ENCODE measurements at regions of chr16 and their contacts with region 1.

Region 1: DNA sequence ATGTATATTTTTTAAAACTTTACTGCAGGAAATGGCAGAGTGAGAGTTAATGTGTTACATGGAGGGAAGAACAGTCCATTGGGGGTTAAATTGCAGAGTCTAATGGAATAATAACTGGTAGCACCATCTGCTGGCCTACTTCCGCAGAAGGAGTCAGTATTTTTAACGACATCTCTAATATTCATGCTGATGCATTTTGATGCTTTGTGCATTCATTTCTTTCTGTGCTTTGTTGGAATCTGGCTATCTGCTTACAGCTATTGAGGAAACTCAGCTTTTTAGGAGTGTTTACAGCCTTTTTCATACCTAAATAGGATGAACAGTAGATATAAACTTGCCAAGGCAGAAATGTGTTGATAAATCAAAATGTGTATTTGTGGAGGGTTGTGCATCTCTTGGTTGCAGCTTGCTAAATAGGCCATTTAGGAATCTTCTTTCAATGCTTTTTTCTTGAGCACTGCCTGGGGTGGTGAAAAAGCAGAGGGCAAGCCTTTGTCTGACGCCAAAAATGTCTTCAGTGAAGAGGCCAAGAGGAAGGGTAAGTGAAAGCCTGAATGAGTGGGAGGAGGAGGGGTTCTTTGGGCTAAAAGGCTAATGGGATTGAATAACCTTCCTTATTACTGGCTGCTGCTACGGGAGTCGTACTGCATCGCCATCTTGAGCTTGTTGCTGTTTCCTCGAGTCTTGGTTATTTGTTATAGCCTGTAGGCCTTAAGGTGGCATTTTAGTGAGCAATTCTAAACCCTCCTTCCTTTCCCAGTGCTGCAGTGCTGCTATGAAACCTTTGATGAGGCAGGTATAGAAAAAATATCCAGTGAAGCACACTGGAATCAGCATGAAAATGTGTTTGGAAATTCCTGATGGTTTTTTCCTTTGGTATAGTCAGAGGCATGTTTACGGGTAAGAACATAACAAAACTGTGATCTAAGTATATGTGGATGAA is 153.3 kb downstream of the CHD9 start:
- DNase-seq: peak; percentile 69
- ATAC-seq: peak; percentile 83
- H3K4me3 ChIP-seq: peak overlapping the region; percentile 72
- H3K27ac ChIP-seq: peak overlapping the region; percentile 95
- H3K4me1 ChIP-seq: peaks cover 3% of the 10 kb centered on the region; the same call in 1 of the 2 replicates
- H3K27me3 ChIP-seq: no peaks in the 10 kb centered on the region
- CTCF ChIP-seq: peak; percentile 51 to 63 (median 55)
- EP300 ChIP-seq: no peak
- POLR2A ChIP-seq: peak; percentile 57; the same call in 1 of the 2 replicates
- RAD21 ChIP-seq: peak; percentile 58

Region 2: GRCh38 chr16:53099318-53100130 is 108.6 kb before region 1 on chr16:
- CTCF ChIA-PET with region 1: interaction called, 10 read pairs
- POLR2A ChIA-PET with region 1: interaction called, 4 read pairs
- RAD21 ChIA-PET with region 1: interaction called, 16 read pairs
- SMC1A ChIA-PET with region 1: interaction called, 7 read pairs
- in situ Hi-C with region 1: no loop called
- intact Hi-C with region 1: no loop called
- DNase-seq: peak; percentile 68
- ATAC-seq: peak; percentile 75
- H3K4me3 ChIP-seq: peak overlapping the region; percentile 79
- H3K27ac ChIP-seq: peak overlapping the region; percentile 96
- H3K4me1 ChIP-seq: peaks cover 25% of the 10 kb centered on the region
- H3K27me3 ChIP-seq: no peaks in the 10 kb centered on the region
- CTCF ChIP-seq: no peak
- EP300 ChIP-seq: peak; percentile 7 to 55; a peak in 1 of 4 replicates
- POLR2A ChIP-seq: peak; percentile 50
- RAD21 ChIP-seq: no peak

Region 3: DNA sequence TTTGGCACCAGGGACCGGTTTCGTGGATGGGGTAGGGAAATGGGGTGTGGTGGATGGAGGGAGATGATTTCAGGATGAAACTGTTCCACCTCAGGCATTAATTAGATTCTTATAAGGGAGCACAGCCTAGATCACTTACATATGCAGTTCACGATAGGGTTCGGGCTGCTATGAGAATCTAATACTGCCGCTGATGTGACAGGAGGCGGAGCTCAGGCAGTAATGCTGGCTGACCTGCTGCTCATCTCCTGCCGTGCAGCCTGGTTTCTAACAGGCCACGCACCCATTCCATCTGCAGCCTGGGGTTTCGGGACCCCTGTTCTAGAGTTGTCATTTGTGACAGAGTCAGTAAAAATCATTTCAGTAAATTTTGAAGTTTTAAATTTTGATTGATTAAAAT is 53.6 kb before region 1 on chr16:
- CTCF ChIA-PET with region 1: interaction called, 16 read pairs
- POLR2A ChIA-PET with region 1: no interaction called
- RAD21 ChIA-PET with region 1: interaction called, 7 read pairs
- SMC1A ChIA-PET with region 1: interaction called, 21 read pairs
- in situ Hi-C with region 1: no loop called
- intact Hi-C with region 1: no loop called
- DNase-seq: no peak
- ATAC-seq: no peak
- H3K4me3 ChIP-seq: no peak overlapping the region
- H3K27ac ChIP-seq: no peak overlapping the region
- H3K4me1 ChIP-seq: no peaks in the 10 kb centered on the region; the same call in 1 of the 2 replicates
- H3K27me3 ChIP-seq: no peaks in the 10 kb centered on the region
- CTCF ChIP-seq: no peak
- EP300 ChIP-seq: no peak
- POLR2A ChIP-seq: no peak
- RAD21 ChIP-seq: no peak

Region 4: GRCh38 chr16:53166099-53166498 is 42.0 kb before region 1 on chr16:
- CTCF ChIA-PET with region 1: interaction called, 16 read pairs
- POLR2A ChIA-PET with region 1: interaction called, 4 read pairs
- RAD21 ChIA-PET with region 1: interaction called, 7 read pairs
- SMC1A ChIA-PET with region 1: interaction called, 9 read pairs
- in situ Hi-C with region 1: no loop called
- intact Hi-C with region 1: loop called (anchors 5 kb)
- DNase-seq: no peak
- ATAC-seq: no peak
- H3K4me3 ChIP-seq: no peak overlapping the region
- H3K27ac ChIP-seq: no peak overlapping the region
- H3K4me1 ChIP-seq: no peaks in the 10 kb centered on the region
- H3K27me3 ChIP-seq: no peaks in the 10 kb centered on the region
- CTCF ChIP-seq: no peak
- EP300 ChIP-seq: no peak
- POLR2A ChIP-seq: no peak
- RAD21 ChIP-seq: no peak

Region 5: DNA sequence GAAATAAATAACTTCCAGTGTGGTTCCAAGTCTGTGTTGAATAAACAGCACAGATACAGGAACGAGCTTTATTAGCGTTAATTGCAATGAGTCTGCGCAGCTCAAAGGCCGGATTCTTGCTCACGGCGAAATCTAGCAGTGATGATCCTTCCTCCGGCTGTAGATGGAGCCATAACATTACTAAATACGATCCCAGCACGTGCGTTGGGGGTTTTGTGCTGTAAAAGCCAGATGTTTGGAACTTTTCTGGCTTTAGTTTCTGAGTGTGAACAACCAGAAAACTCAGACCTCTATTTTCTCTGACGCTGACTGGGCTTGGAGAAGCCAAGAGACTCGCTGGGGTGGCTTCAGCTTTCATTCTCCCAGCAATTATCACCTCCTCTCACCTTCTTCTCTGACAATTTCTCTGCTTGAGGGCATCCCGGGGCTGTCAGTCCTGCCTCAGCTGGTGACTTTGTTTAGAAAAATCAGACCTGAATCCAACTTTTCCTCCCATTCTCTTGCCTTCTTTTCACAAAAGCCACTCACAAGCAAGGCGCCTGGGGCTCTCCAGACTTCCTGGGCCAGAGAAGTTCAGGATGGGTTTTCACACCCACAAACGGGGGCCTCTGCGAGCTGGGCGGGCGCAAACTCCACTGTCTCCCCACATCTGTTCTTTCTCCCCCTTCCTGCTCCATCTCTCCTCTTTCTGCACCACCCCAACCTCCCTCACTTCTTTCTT is 342.0 kb after region 1 on chr16:
- CTCF ChIA-PET with region 1: no interaction called
- POLR2A ChIA-PET with region 1: no interaction called
- RAD21 ChIA-PET with region 1: no interaction called
- SMC1A ChIA-PET with region 1: no interaction called
- in situ Hi-C with region 1: no loop called
- intact Hi-C with region 1: no loop called
- DNase-seq: peak; percentile 40
- ATAC-seq: peak; percentile 89
- H3K4me3 ChIP-seq: no peak overlapping the region
- H3K27ac ChIP-seq: no peak overlapping the region
- H3K4me1 ChIP-seq: no peaks in the 10 kb centered on the region
- H3K27me3 ChIP-seq: no peaks in the 10 kb centered on the region; a peak in 2 of 4 replicates
- CTCF ChIP-seq: peak; percentile 66 to 90 (median 70)
- EP300 ChIP-seq: no peak
- POLR2A ChIP-seq: no peak
- RAD21 ChIP-seq: peak; percentile 85

Measured in GM12878 (cell line).